Esophagus squamous epithelium (tissue), 5 donors: ENCODE measurements at regions of chr1 and their contacts with region 1.

Region 1: GRCh38 chr1:89762779-89763648 is 57.8 kb upstream of the LRRC8D start:
- DNase-seq: peak; percentile 35
- H3K4me3 ChIP-seq: peak overlapping the region; percentile 20 to 62 (median 46)
- H3K27ac ChIP-seq: peak overlapping the region in 3 of 4 donors; percentile 69 to 76 (median 70)
- H3K4me1 ChIP-seq: peaks cover 6 to 34% (median 18%) of the 10 kb centered on the region in 3 donors
- H3K27me3 ChIP-seq: no peaks in the 10 kb centered on the region
- CTCF ChIP-seq: peak; percentile 90 to 99 (median 98)
- POLR2A ChIP-seq: no peak

Region 2: DNA sequence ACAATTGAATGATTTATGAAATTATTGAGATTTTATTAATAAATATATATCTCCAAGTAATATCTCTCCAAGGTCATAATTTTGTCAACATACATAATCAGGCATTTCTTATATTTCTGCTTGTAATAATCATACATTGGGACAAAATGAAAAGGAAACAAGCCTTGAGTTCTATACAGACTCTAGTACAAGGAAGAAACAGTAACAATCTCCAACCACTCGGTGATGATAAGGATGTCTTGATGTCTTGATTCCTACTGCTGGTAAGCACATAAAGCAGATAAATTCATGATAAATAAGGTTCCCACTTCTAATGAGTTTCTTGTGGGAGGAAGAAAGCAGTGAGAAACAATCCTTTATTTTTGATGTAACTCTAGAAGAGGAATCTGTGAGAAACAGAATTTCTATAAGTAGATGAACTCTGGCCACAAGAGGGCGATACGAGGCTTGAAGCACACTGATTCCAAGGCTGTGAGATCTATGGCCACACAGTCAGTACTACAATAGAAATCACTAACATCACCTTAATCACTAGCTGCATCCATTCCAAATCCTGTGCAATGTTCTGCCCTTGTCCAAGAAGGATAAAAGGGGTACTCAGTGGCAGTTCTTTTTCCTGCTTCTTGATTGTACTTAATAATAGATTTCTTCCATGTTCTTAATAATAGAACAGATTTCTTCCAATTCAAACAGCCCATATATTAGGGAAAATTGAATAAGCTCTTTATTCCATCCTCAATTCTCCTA is 279.8 kb before region 1 on chr1:
- intact Hi-C with region 1: loop called (anchors 5 kb)
- DNase-seq: no peak
- H3K4me3 ChIP-seq: no peak overlapping the region
- H3K27ac ChIP-seq: no peak overlapping the region
- H3K4me1 ChIP-seq: no peaks in the 10 kb centered on the region
- H3K27me3 ChIP-seq: no peaks in the 10 kb centered on the region
- CTCF ChIP-seq: peak; percentile 59 to 75 (median 71)
- POLR2A ChIP-seq: no peak

Region 3: DNA sequence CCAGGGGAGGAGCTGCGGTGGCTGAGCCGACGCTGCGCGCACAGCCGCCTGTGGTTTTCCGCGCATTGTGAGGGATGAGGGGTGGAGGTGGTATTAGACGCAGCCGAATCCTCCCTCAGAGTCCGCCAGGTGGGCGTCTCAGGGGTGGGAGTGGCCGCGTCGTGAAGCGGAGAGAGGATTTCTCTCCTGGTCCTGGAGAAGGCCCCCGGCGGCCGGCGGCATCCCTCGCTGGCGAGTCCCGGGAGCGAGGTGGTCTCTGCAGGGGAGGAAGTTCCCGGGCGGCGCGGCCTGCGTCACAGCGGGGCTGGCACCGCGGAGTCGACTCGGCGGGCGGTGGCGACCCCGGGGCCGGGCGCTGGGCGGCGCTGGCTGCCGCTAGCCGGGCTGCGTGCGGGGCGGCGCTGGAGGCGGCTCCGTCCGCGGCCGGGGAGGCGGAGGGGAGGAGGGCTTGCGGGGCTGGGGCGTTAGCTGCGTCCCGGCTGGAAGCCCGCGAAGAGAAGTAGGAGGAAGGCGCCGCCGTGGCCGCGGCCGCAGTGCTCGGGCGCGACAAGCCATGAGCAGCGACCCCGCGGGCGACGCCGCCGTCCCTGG is 130.3 kb before region 1 on chr1 and contains the start of gene LRRC8C:
- intact Hi-C with region 1: loop called (anchors 5 kb)
- DNase-seq: no peak
- H3K4me3 ChIP-seq: peak within 1 kb of the TSS; percentile 65 to 96 (median 84)
- H3K27ac ChIP-seq: peak within 1 kb of the TSS; percentile 85 to 97 (median 89)
- H3K4me1 ChIP-seq: peaks cover 4 to 71% (median 6%) of the 10 kb centered on the region in 3 donors
- H3K27me3 ChIP-seq: peaks cover 0 to 12% (median 0%) of the 10 kb centered on the region in 4 donors
- CTCF ChIP-seq: peak in 4 of 6 experiments; percentile 52 to 77 (median 68)
- POLR2A ChIP-seq: peak in 2 of 4 donors; percentile 43 to 50
- total RNA-seq, gene LRRC8C: 1.4 to 5.0 (median 3.2) TPM